Pancreas (tissue), 10 donors: ENCODE measurements at regions of chr5 and their contacts with region 1.

Region 1: DNA sequence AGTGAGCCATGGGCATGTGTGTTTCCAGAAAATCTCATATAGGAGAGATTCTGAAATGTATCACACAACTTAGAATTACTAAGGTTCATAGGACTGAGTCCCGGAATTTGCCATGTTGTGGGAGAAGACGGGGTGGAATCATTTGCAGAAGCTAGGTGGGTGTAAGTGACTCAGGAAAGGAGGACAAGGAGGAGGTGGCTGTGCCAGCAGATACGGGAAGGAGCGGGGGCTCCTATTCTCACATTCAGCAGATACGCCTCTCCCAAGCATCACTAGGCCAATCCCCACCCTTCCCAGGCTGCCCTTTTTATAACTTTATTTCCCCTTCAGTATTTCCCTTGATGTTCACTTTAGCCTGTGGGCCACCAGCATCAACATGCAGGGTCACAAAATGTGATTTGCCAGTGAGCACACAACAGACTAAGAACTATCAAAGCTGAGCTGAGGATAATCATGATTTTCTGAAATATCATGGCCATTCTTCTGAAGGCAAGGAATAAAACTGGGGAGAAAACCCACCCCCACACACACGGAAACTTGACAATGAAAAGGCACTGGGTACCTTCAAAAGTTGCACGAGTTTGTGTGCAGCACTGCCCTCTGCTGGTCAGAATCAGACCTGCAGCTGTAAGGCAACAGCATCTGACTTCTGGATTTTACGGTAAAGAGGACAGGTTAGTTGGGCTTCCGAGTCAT is 133.2 kb downstream of the MTX3 start:
- DNase-seq: peak; percentile 39 to 93 (median 78)
- ATAC-seq: peak; percentile 67 to 92 (median 90)
- H3K4me3 ChIP-seq: no peak overlapping the region
- H3K27ac ChIP-seq: no peak overlapping the region
- H3K4me1 ChIP-seq: no peaks in the 10 kb centered on the region
- H3K27me3 ChIP-seq: no peaks in the 10 kb centered on the region
- CTCF ChIP-seq: peak; percentile 87 to 95 (median 92)

Region 2: DNA sequence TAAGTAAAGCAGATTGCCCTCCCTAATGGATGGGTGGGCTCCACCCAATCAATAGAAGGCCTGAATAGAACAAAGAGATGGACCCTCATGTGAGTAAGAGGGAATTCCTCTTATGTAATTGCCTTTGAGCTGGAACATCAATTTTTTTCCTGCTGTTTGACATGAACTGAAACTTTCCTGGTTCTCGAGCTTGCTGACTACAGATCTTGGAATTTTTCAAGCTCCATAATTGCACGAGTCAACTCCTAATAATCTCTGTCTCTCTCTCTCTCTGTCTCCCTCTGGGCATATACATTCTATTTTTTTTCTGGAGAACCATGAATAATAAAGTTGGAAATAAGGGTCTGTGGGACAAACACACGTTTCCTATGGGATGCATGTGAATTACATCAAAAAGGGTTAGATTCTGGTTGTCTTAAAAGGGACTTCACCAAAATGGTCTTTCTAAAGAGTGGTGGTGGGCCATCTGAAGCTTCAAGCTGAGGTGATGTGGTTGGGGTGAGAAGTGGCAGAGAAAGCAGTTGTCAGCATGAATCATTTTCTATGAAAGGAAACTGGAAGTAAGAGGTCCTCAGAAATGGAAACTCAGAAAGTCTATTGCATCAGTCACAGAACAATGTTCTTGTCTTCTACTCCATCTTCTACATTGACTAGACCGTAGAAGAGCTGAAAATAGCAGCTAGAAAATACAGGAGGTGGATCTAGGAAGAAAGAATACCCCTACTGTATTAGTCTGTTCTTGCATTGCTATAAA is 296.9 kb before region 1 on chr5:
- intact Hi-C with region 1: loop called in 1 of 3 experiments (anchors 5 kb)
- DNase-seq: no peak
- ATAC-seq: no peak
- H3K4me3 ChIP-seq: no peak overlapping the region
- H3K27ac ChIP-seq: no peak overlapping the region
- H3K4me1 ChIP-seq: no peaks in the 10 kb centered on the region
- H3K27me3 ChIP-seq: no peaks in the 10 kb centered on the region
- CTCF ChIP-seq: no peak

Region 3: DNA sequence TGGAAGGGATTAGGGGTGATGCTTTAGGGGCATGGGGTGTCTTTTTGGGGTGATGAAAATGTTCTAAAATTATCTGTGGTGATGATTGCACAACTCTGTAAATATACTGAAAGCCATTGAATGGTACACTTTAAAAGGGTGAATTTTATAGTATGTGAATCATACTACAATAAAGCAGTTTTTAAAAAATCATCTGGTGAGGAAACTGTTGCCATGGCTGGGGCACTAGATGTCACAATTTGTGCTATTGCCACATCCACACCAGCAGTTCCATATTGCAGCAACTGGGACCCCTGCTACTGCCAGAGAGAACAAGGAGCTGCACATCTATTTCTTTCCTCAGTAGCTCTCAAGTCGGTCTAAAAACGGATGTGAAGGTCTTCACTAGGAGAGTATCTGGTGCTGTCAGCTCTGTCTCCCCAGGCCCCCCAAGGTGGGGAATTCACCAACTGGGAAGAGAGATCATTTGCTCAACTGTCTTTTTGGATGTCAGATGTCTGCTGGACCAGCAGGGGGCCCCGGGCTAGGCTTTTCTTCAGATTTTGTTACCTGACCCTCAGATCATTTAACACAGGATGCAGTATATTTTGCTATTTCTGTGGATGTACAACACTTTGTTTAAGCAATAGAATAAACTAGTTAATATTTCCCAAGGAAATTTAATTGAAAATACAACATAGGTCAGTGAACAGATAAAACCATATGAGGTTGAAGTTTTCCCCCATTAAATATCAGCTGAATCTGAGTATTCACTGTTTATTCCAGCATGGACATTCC is 155.1 kb before region 1 on chr5:
- intact Hi-C with region 1: loop called in 1 of 3 experiments (anchors 10 kb)
- DNase-seq: no peak
- ATAC-seq: no peak
- H3K4me3 ChIP-seq: no peak overlapping the region
- H3K27ac ChIP-seq: no peak overlapping the region
- H3K4me1 ChIP-seq: peaks cover 0 to under 1% (median 0%) of the 10 kb centered on the region in 3 donors
- H3K27me3 ChIP-seq: no peaks in the 10 kb centered on the region
- CTCF ChIP-seq: peak in 3 of 4 donors; percentile 13 to 29 (median 27)

Region 4: GRCh38 chr5:79829260-79829659 is 28.6 kb before region 1 on chr5:
- intact Hi-C with region 1: no loop called
- DNase-seq: no peak
- ATAC-seq: no peak
- H3K4me3 ChIP-seq: no peak overlapping the region
- H3K27ac ChIP-seq: no peak overlapping the region
- H3K4me1 ChIP-seq: peaks cover 0 to 3% (median 3%) of the 10 kb centered on the region in 3 donors
- H3K27me3 ChIP-seq: no peaks in the 10 kb centered on the region
- CTCF ChIP-seq: no peak